ENCODE measurements at regions of chr3 and their contacts with region 1.

Region 1: DNA sequence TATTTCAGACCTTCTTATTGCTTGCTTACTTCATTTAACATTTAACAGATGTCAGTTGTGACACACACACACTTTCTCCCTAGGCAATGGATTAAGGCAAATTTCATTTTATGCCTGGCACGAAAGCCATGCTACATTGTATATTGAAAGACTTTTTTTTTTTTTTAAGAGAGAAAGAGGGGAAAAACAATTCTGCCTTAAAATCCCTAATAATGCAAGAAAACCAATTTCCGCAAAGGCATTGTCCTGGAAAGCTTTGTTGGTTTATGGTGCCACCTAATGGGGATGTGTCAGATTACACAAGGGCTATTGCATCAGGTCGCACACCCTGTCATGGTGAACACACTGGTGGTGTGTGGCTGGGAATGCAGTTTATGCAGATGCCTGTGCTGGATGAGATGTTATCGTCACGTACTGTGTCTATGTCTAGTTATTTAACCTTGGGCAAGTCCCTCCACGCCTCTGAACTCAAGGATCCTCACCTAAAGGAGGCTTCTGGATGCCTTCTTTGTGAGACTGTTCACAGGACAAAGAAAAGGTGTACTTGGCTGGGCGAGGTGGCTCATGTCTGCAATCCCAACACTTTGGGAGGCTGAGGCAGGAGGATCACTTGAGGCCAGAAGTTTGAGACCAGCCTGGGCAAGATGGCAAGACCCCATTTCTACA is 37.3 kb upstream of the RFTN1 start:
- DNase-seq: peak; percentile 87
- H3K4me3 ChIP-seq: no peak overlapping the region
- H3K27ac ChIP-seq: no peak overlapping the region
- H3K4me1 ChIP-seq: peaks cover 6% of the 10 kb centered on the region
- H3K27me3 ChIP-seq: peaks cover 3 to 4% of the 10 kb centered on the region in 2 experiments
- CTCF ChIP-seq: peak; percentile 72 to 88
- POLR2A ChIP-seq: no peak

Region 2: GRCh38 chr3:16264708-16265454 is 285.9 kb before region 1 on chr3 and contains the starts of genes DPH3 and OXNAD1:
- CTCF ChIA-PET with region 1: interaction called, 70 read pairs
- POLR2A ChIA-PET with region 1: interaction called, 7 read pairs
- dilution Hi-C with region 1: no loop called
- intact Hi-C with region 1: loop called (anchors 1 kb)
- DNase-seq: peak; percentile 99
- H3K4me3 ChIP-seq: peak within 1 kb of the TSS; percentile 66 to 93 (median 72)
- H3K27ac ChIP-seq: peak within 1 kb of the TSS; percentile 82
- H3K4me1 ChIP-seq: peaks cover 23% of the 10 kb centered on the region
- H3K27me3 ChIP-seq: no peaks in the 10 kb centered on the region
- CTCF ChIP-seq: no peak
- POLR2A ChIP-seq: peak; percentile 82
- total RNA-seq, gene DPH3: 28.7 and 29.6 TPM in 2 replicates
- total RNA-seq, gene OXNAD1: 8.9 and 9.7 TPM in 2 replicates

Region 3: GRCh38 chr3:16378920-16379319 is 171.9 kb before region 1 on chr3:
- CTCF ChIA-PET with region 1: no interaction called
- POLR2A ChIA-PET with region 1: no interaction called
- dilution Hi-C with region 1: no loop called
- intact Hi-C with region 1: loop called (anchors 1 kb)
- DNase-seq: no peak
- H3K4me3 ChIP-seq: no peak overlapping the region
- H3K27ac ChIP-seq: no peak overlapping the region
- H3K4me1 ChIP-seq: no peaks in the 10 kb centered on the region
- H3K27me3 ChIP-seq: no peaks in the 10 kb centered on the region
- CTCF ChIP-seq: no peak
- POLR2A ChIP-seq: no peak

Region 4: DNA sequence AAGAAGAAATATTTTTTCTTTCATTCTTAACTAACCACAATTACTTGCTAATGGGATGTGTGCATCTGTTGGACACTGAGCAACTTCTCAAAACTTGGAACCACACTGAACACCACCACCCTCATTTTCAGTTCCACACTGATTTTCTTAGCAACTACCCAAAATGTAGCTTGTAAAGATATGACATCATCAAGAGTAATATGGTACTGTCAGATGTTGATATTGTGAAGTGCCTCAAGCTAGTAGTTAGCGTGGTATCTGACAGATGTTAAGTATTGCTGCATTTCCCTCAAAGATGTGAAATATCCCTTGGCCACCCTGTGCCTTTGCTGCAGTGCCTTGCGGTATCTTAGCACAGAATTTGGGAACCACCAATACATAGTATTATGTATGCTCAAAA is 46.6 kb before region 1 on chr3:
- CTCF ChIA-PET with region 1: no interaction called
- POLR2A ChIA-PET with region 1: no interaction called
- dilution Hi-C with region 1: no loop called
- intact Hi-C with region 1: no loop called
- DNase-seq: no peak
- H3K4me3 ChIP-seq: no peak overlapping the region
- H3K27ac ChIP-seq: no peak overlapping the region
- H3K4me1 ChIP-seq: no peaks in the 10 kb centered on the region
- H3K27me3 ChIP-seq: no peaks in the 10 kb centered on the region
- CTCF ChIP-seq: no peak
- POLR2A ChIP-seq: no peak

Region 5: GRCh38 chr3:16534640-16535262 is 16.1 kb before region 1 on chr3:
- CTCF ChIA-PET with region 1: interaction called, 17 read pairs
- POLR2A ChIA-PET with region 1: no interaction called
- dilution Hi-C with region 1: no loop called
- intact Hi-C with region 1: no loop called
- DNase-seq: no peak
- H3K4me3 ChIP-seq: no peak overlapping the region
- H3K27ac ChIP-seq: no peak overlapping the region
- H3K4me1 ChIP-seq: no peaks in the 10 kb centered on the region
- H3K27me3 ChIP-seq: peaks cover 16 to 32% of the 10 kb centered on the region in 2 experiments
- CTCF ChIP-seq: no peak
- POLR2A ChIP-seq: no peak